K562 (cell line): ENCODE measurements at regions of chr17 and their contacts with region 1.

Region 1: GRCh38 chr17:10618202-10618635 is 38.9 kb downstream of the MYH3 start:
- DNase-seq: peak; percentile 52 to 64 (median 56)
- ATAC-seq: peak; percentile 91
- H3K4me3 ChIP-seq: no peak overlapping the region
- H3K27ac ChIP-seq: no peak overlapping the region
- H3K4me1 ChIP-seq: no peaks in the 10 kb centered on the region; a peak in 1 of 5 replicates
- H3K27me3 ChIP-seq: peaks cover 0 to 6% of the 10 kb centered on the region in 2 experiments; a peak in 1 of 5 replicates
- CTCF ChIP-seq: peak; percentile 68 to 80 (median 70)
- EP300 ChIP-seq: no peak
- POLR2A ChIP-seq: no peak
- RAD21 ChIP-seq: peak; percentile 28 to 58; a peak in 3 of 4 replicates

Region 2: DNA sequence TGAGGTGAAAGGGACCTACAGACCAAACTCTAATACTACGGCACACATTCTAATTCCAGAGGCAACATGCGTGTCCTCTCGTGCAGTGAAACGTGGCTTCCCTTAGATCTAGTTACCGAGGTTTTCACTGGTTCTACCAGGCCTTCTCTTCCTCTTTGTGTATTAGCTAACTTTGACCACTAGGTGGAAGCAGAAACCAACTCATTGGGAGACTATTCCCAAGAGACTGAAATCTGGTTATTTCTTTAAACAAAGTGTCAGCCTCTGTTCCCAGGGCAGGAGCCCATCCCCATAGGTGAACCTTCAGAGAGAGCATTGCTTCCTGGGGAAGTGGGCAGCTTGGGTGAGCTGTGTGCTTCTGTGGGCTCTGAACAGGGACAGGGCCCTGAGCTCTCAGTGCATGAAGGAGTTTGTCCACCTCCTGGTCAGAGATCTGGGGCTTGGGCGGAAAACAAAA is 693.5 kb before region 1 on chr17:
- CTCF ChIA-PET with region 1: interaction called, 5 read pairs
- POLR2A ChIA-PET with region 1: no interaction called
- in situ Hi-C with region 1: loop called (anchors 10 kb)
- intact Hi-C with region 1: loop called (anchors 5 kb)
- DNase-seq: peak; percentile 23 to 54 (median 46)
- ATAC-seq: peak; percentile 82
- H3K4me3 ChIP-seq: no peak overlapping the region
- H3K27ac ChIP-seq: no peak overlapping the region
- H3K4me1 ChIP-seq: no peaks in the 10 kb centered on the region
- H3K27me3 ChIP-seq: no peaks in the 10 kb centered on the region
- CTCF ChIP-seq: peak; percentile 57 to 74 (median 66); a peak in 5 of 6 replicates
- EP300 ChIP-seq: no peak
- POLR2A ChIP-seq: no peak
- RAD21 ChIP-seq: peak; percentile 34 to 71; a peak in 3 of 4 replicates

Region 3: GRCh38 chr17:10295728-10296343 is 322.4 kb before region 1 on chr17:
- CTCF ChIA-PET with region 1: interaction called, 19 read pairs
- POLR2A ChIA-PET with region 1: no interaction called
- in situ Hi-C with region 1: no loop called
- intact Hi-C with region 1: loop called (anchors 1 kb)
- DNase-seq: peak; percentile 47 to 58 (median 54)
- ATAC-seq: peak; percentile 85
- H3K4me3 ChIP-seq: no peak overlapping the region
- H3K27ac ChIP-seq: no peak overlapping the region
- H3K4me1 ChIP-seq: peaks cover 0 to 2% of the 10 kb centered on the region in 2 experiments; a peak in 1 of 5 replicates
- H3K27me3 ChIP-seq: no peaks in the 10 kb centered on the region
- CTCF ChIP-seq: peak; percentile 54 to 68 (median 64); a peak in 5 of 6 replicates
- EP300 ChIP-seq: no peak
- POLR2A ChIP-seq: no peak
- RAD21 ChIP-seq: peak; percentile 35 to 64

Region 4: DNA sequence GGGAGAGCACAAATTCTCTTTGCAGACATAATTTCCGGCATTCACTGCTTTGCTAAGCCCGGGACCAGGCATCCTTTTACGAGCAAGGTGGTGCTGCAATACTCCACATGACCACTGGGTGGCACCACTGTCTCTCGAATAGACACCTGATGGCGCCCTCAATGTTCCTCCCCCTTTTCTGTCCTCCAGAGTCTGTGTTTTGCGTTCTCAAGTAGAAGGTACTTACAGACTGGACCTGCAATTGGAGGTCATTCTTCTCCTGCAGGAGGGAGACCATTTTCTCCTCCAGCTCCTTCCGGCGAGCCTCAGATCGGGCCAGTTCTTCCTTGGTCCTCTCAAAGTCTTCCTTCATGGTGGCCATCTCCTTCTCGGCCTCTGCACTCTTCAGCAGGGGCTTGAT is 290.6 kb before region 1 on chr17:
- CTCF ChIA-PET with region 1: interaction called, 17 read pairs
- POLR2A ChIA-PET with region 1: interaction called, 6 read pairs
- in situ Hi-C with region 1: loop called (anchors 10 kb)
- intact Hi-C with region 1: loop called (anchors 1 kb)
- DNase-seq: peak; percentile 70 to 76 (median 76)
- ATAC-seq: peak; percentile 88
- H3K4me3 ChIP-seq: no peak overlapping the region
- H3K27ac ChIP-seq: no peak overlapping the region
- H3K4me1 ChIP-seq: peaks cover 0 to 2% of the 10 kb centered on the region in 2 experiments; a peak in 2 of 5 replicates
- H3K27me3 ChIP-seq: no peaks in the 10 kb centered on the region
- CTCF ChIP-seq: peak; percentile 71 to 86 (median 80)
- EP300 ChIP-seq: no peak
- POLR2A ChIP-seq: no peak
- RAD21 ChIP-seq: peak; percentile 37 to 71

Region 5: GRCh38 chr17:10589553-10590125 is 28.6 kb before region 1 on chr17:
- CTCF ChIA-PET with region 1: no interaction called
- POLR2A ChIA-PET with region 1: no interaction called
- in situ Hi-C with region 1: no loop called
- intact Hi-C with region 1: no loop called
- DNase-seq: no peak
- ATAC-seq: no peak
- H3K4me3 ChIP-seq: no peak overlapping the region
- H3K27ac ChIP-seq: no peak overlapping the region
- H3K4me1 ChIP-seq: no peaks in the 10 kb centered on the region
- H3K27me3 ChIP-seq: no peaks in the 10 kb centered on the region; a peak in 1 of 5 replicates
- CTCF ChIP-seq: no peak
- EP300 ChIP-seq: no peak
- POLR2A ChIP-seq: no peak
- RAD21 ChIP-seq: no peak